Tibial artery (tissue), 4 donors: ENCODE measurements at regions of chr20 and their contacts with region 1.

Region 1: DNA sequence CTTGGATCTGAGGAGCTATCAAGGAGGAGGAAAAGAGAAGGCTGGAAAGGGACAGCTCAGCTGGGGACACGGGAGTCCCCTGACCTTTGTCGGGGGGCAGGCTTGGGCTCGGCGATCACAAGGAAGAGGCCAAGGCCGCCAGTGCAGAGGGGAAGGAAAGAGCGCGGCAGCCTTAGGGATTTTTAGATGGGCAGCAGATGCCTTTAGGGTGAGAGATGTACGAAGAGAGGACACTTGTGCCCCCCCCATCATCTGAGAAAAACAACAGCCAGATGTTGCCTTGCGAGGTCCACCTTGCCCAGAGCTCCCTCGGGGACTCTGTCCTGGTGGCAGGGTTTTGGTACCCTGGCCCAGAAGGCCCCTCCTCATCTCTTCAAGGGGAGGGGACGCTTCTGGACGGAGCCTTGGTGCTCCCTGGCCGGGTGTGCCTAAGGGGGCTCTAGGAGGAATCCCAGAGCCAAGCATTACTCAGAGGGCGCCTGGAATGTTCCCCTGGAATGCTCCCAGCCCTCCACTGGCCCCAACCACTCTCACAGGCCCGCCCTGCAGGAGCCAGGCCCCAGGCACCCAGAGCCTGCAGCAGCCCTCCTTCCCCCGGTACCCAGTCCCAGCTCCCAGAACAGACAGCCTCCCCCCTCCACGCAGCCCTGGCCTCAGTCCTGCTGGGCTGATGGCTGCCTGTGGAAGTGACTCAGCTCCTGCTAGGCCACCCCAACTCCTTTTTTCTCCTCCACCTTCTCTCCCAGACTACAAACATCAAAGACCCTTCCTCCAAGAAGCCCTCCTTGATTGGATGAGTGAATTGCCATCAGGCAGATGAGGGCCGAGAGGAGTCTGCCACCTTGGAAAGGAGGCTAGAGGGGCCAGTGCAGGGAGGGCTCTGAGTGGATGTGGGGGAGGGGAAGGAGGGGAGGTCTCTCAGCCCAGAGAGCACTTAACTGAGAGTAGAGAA is 1.8 kb downstream of the ADAM33 start:
- DNase-seq: peak; percentile 76 to 87
- H3K4me3 ChIP-seq: peak overlapping the region; percentile 61 to 84
- H3K27ac ChIP-seq: peak overlapping the region; percentile 82 to 90
- H3K4me1 ChIP-seq: peaks cover 0 to 62% (median 48%) of the 10 kb centered on the region in 4 donors
- H3K27me3 ChIP-seq: no peaks in the 10 kb centered on the region
- CTCF ChIP-seq: no peak

Region 2: DNA sequence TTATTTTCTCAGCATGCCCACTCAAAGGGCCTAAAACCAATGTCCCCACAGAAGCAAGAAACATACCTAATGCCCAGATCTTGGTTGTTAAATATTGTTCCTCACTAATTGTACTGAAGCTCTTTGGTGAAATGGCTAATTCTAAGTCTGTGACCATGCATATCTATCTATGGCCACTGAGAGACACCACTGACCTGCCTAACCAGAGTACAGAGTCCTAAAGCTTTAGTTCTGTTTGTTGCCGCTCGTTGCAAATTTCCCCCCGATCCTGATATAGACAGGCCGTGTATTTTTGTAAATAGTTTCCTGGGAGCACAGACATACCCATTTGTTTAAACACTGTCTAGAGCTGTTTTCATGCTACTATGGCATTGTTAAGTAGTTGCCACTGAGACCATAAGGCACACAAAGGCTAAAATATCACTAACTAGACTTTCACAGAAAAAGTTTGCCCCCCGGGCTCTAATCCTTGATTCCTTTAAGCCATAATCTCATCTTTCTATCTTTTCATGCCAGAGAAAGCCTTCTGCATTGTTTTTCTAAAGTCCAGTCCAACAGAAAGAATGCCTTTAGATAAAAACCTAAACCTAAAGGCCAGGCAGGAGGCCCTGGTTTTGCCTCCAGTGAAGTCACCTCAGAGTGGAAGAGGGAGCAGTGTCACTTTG is 321.2 kb before region 1 on chr20:
- intact Hi-C with region 1: no loop called
- DNase-seq: no peak
- H3K4me3 ChIP-seq: no peak overlapping the region
- H3K27ac ChIP-seq: no peak overlapping the region
- H3K4me1 ChIP-seq: no peaks in the 10 kb centered on the region
- H3K27me3 ChIP-seq: no peaks in the 10 kb centered on the region
- CTCF ChIP-seq: no peak

Region 3: GRCh38 chr20:3710703-3711483 is 30.9 kb after region 1 on chr20:
- intact Hi-C with region 1: loop called (anchors 2 kb)
- DNase-seq: peak in 1 of 2 donors; percentile 69
- H3K4me3 ChIP-seq: no peak overlapping the region
- H3K27ac ChIP-seq: no peak overlapping the region
- H3K4me1 ChIP-seq: peaks cover 0 to 20% (median 12%) of the 10 kb centered on the region in 4 donors
- H3K27me3 ChIP-seq: no peaks in the 10 kb centered on the region
- CTCF ChIP-seq: peak; percentile 95 to 97

Region 4: GRCh38 chr20:3781153-3781910 is 101.3 kb after region 1 on chr20 and contains the start of gene SPEF1:
- intact Hi-C with region 1: loop called (anchors 5 kb)
- DNase-seq: peak; percentile 83 to 91
- H3K4me3 ChIP-seq: peak within 1 kb of the TSS in 1 of 2 donors; percentile 39
- H3K27ac ChIP-seq: peak within 1 kb of the TSS; percentile 52 to 65
- H3K4me1 ChIP-seq: peaks cover 6 to 68% (median 48%) of the 10 kb centered on the region in 4 donors
- H3K27me3 ChIP-seq: no peaks in the 10 kb centered on the region
- CTCF ChIP-seq: peak; percentile 42 to 58

Region 5: GRCh38 chr20:3846740-3847428 is 166.9 kb after region 1 on chr20 and contains the start of gene MAVS:
- intact Hi-C with region 1: loop called (anchors 10 kb)
- DNase-seq: peak; percentile 86 to 95
- H3K4me3 ChIP-seq: peak within 1 kb of the TSS; percentile 77 to 82
- H3K27ac ChIP-seq: peak within 1 kb of the TSS; percentile 95
- H3K4me1 ChIP-seq: peaks cover 0 to 32% (median 18%) of the 10 kb centered on the region in 4 donors
- H3K27me3 ChIP-seq: no peaks in the 10 kb centered on the region
- CTCF ChIP-seq: peak in 1 of 2 experiments; percentile 5